Heart right ventricle (tissue), 16 donors: ENCODE measurements at regions of chr3 and their contacts with region 1.

Region 1: DNA sequence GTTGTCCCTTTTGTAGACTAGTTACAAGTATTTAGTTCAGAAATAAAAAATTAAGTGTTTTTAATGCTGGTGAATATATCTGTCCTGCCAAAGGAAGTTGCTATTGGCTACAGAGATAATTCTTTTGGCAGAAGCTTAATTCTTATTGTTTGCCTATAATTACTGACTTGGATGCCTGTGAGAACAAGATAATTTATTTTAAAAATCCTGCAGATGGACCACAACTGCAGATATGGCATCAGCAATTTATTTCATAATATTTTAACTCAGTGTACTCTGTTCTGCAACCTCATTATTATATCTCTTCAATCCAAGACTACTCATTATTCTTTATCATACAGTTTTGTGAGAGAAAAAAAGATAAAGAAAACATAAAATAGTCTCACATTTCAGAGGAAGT is 789.8 kb downstream of the NAALADL2 start:
- DNase-seq: no peak
- ATAC-seq: peak in 2 of 8 donors; percentile 27 to 46
- H3K4me3 ChIP-seq: no peak overlapping the region
- H3K27ac ChIP-seq: no peak overlapping the region
- H3K4me1 ChIP-seq: peaks cover 0 to 11% (median 0%) of the 10 kb centered on the region in 9 donors
- H3K27me3 ChIP-seq: no peaks in the 10 kb centered on the region
- CTCF ChIP-seq: no peak

Region 2: GRCh38 chr3:175662815-175663214 is 13.9 kb after region 1 on chr3:
- intact Hi-C with region 1: loop called in 1 of 10 experiments (anchors 2 kb)
- DNase-seq: no peak
- ATAC-seq: no peak
- H3K4me3 ChIP-seq: no peak overlapping the region
- H3K27ac ChIP-seq: no peak overlapping the region
- H3K4me1 ChIP-seq: no peaks in the 10 kb centered on the region
- H3K27me3 ChIP-seq: no peaks in the 10 kb centered on the region
- CTCF ChIP-seq: no peak